ENCODE measurements at regions of chr3 and their contacts with region 1.

Region 1: GRCh38 chr3:18758047-18758704 is 333.0 kb upstream of the SATB1 start:
- DNase-seq: peak; percentile 51 to 82 (median 77)
- H3K4me3 ChIP-seq: no peak overlapping the region
- H3K4me3 Mint-ChIP-seq: peak overlapping the region in 1 of 8 donors; percentile 13
- H3K27ac ChIP-seq: no peak overlapping the region
- H3K27ac Mint-ChIP-seq: peak overlapping the region in 6 of 7 donors; percentile 7 to 77 (median 34)
- H3K4me1 ChIP-seq: peaks cover 18% of the 10 kb centered on the region
- H3K4me1 Mint-ChIP-seq: peaks cover 21 to 24% (median 23%) of the 10 kb centered on the region in 4 donors
- H3K27me3 ChIP-seq: no peaks in the 10 kb centered on the region
- H3K27me3 Mint-ChIP-seq: no peaks in the 10 kb centered on the region

Region 2: DNA sequence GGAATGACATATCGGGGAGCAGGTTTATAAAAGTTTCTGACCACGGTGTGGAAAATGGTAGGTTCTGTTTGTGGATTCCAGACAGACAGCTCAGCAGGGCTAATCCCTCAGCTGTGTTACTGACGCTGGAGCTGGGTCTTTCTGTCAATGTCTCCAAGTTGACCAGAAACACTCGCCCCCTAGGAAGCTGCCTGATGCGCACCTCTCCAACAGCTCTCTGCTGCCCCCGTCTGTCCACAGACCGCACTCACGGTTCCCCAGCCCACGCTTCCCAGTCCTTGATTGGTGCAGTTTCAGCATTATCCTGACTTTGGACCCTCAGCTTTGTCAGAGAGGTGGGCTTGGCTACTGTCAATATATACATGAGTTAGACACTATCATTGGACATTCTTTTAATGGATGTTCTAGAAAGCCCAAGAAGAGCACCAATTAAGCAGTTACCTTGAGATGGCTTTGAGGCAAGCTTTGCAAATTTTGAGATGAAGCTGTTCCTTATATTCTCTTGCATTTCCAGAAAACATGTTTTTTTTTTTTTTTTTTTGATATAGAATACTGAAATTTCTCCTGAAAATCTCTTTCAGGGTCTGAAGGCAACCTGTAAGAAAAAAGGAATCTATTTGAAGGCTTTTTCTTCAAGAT is 916.9 kb before region 1 on chr3:
- CTCF ChIA-PET with region 1: no interaction called
- POLR2A ChIA-PET with region 1: no interaction called
- intact Hi-C with region 1: loop called (anchors 10 kb)
- DNase-seq: peak in 4 of 5 donors; percentile 47 to 57 (median 52)
- H3K4me3 ChIP-seq: no peak overlapping the region
- H3K4me3 Mint-ChIP-seq: no peak overlapping the region
- H3K27ac ChIP-seq: no peak overlapping the region
- H3K27ac Mint-ChIP-seq: no peak overlapping the region
- H3K4me1 ChIP-seq: no peaks in the 10 kb centered on the region
- H3K4me1 Mint-ChIP-seq: no peaks in the 10 kb centered on the region
- H3K27me3 ChIP-seq: no peaks in the 10 kb centered on the region
- H3K27me3 Mint-ChIP-seq: peaks cover 0 to 9% of the 10 kb centered on the region in 2 donors

Region 3: DNA sequence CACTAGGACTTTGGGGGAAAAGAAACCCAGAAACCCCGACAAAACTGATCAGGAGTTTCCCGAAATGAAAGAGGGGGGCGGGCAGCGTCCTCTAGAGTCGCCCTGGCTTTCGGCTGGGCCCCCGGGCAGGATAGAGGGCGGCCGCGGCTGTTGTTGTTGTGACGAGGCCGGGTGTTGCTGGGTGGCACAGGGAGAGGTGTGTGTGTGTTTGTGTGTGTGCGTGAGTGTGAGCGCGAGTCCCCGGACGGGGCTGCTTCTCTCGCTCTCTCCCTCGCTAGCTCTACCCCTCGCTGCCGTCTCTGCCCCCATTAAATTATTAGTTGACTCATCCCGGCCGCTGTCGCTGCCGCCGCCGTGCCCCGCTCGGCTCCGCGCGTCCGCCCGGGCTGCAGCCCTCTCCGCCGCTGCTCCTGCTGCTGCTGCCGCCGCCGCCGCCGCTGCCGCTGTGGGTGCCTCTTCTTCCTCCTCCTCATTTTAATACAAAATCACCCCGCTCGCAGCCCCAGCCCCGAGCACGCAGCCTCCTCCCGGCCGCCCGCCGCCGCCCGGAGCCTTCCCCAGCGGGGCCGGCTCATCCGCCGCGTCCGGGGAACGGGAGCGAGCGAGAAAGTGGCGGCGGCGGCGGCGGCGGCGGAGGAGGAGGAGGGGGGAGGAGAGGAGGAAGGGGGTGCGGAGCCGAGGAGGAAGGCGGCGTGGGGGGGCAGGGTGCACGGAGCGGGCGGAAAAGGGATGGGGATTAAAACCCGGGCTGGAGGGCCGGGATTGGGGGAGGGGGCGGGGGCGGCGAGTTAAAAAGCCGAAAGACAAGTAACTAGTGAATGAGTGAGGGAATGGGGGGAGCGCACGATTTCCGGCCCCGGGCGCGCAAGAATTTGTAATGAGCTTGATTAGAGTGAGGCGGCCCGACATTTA is 333.2 kb before region 1 on chr3 and contains the start of gene SATB1:
- CTCF ChIA-PET with region 1: interaction called, 8 read pairs
- POLR2A ChIA-PET with region 1: no interaction called
- intact Hi-C with region 1: loop called (anchors 1 kb)
- DNase-seq: peak; percentile 67 to 81 (median 68)
- H3K4me3 ChIP-seq: peak within 1 kb of the TSS; percentile 66 to 77
- H3K4me3 Mint-ChIP-seq: peak within 1 kb of the TSS; percentile 91 to 98 (median 97)
- H3K27ac ChIP-seq: peak within 1 kb of the TSS; percentile 79
- H3K27ac Mint-ChIP-seq: peak within 1 kb of the TSS; percentile 95 to 98 (median 97)
- H3K4me1 ChIP-seq: peaks cover 72% of the 10 kb centered on the region
- H3K4me1 Mint-ChIP-seq: peaks cover 48 to 88% (median 65%) of the 10 kb centered on the region in 4 donors
- H3K27me3 ChIP-seq: no peaks in the 10 kb centered on the region
- H3K27me3 Mint-ChIP-seq: peaks cover 0 to 1% of the 10 kb centered on the region in 2 donors
- total RNA-seq, gene SATB1: 211 TPM

Region 4: GRCh38 chr3:18499301-18499700 is 258.9 kb before region 1 on chr3:
- CTCF ChIA-PET with region 1: no interaction called
- POLR2A ChIA-PET with region 1: no interaction called
- intact Hi-C with region 1: loop called (anchors 2 kb)
- DNase-seq: peak; percentile 25 to 31 (median 27)
- H3K4me3 ChIP-seq: no peak overlapping the region
- H3K4me3 Mint-ChIP-seq: peak overlapping the region in 6 of 8 donors; percentile 33 to 78 (median 70)
- H3K27ac ChIP-seq: no peak overlapping the region
- H3K27ac Mint-ChIP-seq: peak overlapping the region in 6 of 7 donors; percentile 0 to 86 (median 72)
- H3K4me1 ChIP-seq: peaks cover 23% of the 10 kb centered on the region
- H3K4me1 Mint-ChIP-seq: peaks cover 11 to 27% (median 23%) of the 10 kb centered on the region in 4 donors
- H3K27me3 ChIP-seq: no peaks in the 10 kb centered on the region
- H3K27me3 Mint-ChIP-seq: no peaks in the 10 kb centered on the region

Region 5: DNA sequence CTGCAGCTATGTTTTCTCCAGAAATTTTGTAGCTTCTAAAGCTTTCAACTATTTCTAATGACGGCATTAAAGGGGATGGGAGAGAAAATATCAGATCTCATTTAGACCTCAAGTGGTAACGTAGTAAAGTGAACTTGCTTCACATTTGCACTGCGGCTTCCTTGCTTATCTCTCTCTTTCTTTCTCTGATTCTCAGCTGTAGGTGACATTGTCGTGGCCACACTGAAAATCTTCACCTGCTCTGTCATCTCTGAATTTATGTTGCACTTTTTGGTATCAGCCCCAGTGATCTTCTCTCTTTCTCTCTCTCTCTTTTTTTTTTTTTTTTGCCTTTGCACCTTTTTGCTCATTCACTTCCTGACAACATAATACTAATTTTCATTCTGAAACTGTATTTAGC is 78.9 kb before region 1 on chr3:
- CTCF ChIA-PET with region 1: interaction called, 10 read pairs
- POLR2A ChIA-PET with region 1: interaction called, 6 read pairs
- intact Hi-C with region 1: loop called (anchors 5 kb)
- DNase-seq: peak; percentile 46 to 65 (median 58)
- H3K4me3 ChIP-seq: no peak overlapping the region
- H3K4me3 Mint-ChIP-seq: peak overlapping the region; percentile 52 to 87 (median 70)
- H3K27ac ChIP-seq: no peak overlapping the region
- H3K27ac Mint-ChIP-seq: peak overlapping the region; percentile 30 to 90 (median 76)
- H3K4me1 ChIP-seq: peaks cover 52% of the 10 kb centered on the region
- H3K4me1 Mint-ChIP-seq: peaks cover 53 to 73% (median 63%) of the 10 kb centered on the region in 4 donors
- H3K27me3 ChIP-seq: no peaks in the 10 kb centered on the region
- H3K27me3 Mint-ChIP-seq: no peaks in the 10 kb centered on the region

Region 6: GRCh38 chr3:18725668-18726407 is 32.3 kb before region 1 on chr3:
- CTCF ChIA-PET with region 1: interaction called, 11 read pairs
- POLR2A ChIA-PET with region 1: interaction called, 11 read pairs
- intact Hi-C with region 1: loop called (anchors 1 kb)
- DNase-seq: peak; percentile 56 to 74 (median 68)
- H3K4me3 ChIP-seq: peak overlapping the region in 1 of 2 donors; percentile 6
- H3K4me3 Mint-ChIP-seq: peak overlapping the region; percentile 56 to 80 (median 76)
- H3K27ac ChIP-seq: peak overlapping the region; percentile 53
- H3K27ac Mint-ChIP-seq: peak overlapping the region; percentile 92 to 99 (median 94)
- H3K4me1 ChIP-seq: peaks cover 74% of the 10 kb centered on the region
- H3K4me1 Mint-ChIP-seq: peaks cover 64 to 79% (median 72%) of the 10 kb centered on the region in 4 donors
- H3K27me3 ChIP-seq: no peaks in the 10 kb centered on the region
- H3K27me3 Mint-ChIP-seq: no peaks in the 10 kb centered on the region

Region 7: GRCh38 chr3:19183584-19183983 is 425.4 kb after region 1 on chr3:
- CTCF ChIA-PET with region 1: no interaction called
- POLR2A ChIA-PET with region 1: no interaction called
- intact Hi-C with region 1: no loop called
- DNase-seq: no peak
- H3K4me3 ChIP-seq: no peak overlapping the region
- H3K4me3 Mint-ChIP-seq: no peak overlapping the region
- H3K27ac ChIP-seq: no peak overlapping the region
- H3K27ac Mint-ChIP-seq: no peak overlapping the region
- H3K4me1 ChIP-seq: no peaks in the 10 kb centered on the region
- H3K4me1 Mint-ChIP-seq: peaks cover 0 to 3% (median 0%) of the 10 kb centered on the region in 4 donors
- H3K27me3 ChIP-seq: no peaks in the 10 kb centered on the region
- H3K27me3 Mint-ChIP-seq: no peaks in the 10 kb centered on the region